T-cell (primary cell): ENCODE measurements at regions of chr1 and their contacts with region 1.

Region 1: GRCh38 chr1:27662707-27663393 is 9.1 kb downstream of the IFI6 start:
- DNase-seq: peak; percentile 65 to 95 (median 85)
- ATAC-seq: peak; percentile 66 to 85 (median 82)
- H3K4me3 ChIP-seq: peak overlapping the region; percentile 39 to 42
- H3K4me3 Mint-ChIP-seq: peak overlapping the region; percentile 75 to 84 (median 79)
- H3K27ac ChIP-seq: peak overlapping the region; percentile 90
- H3K27ac Mint-ChIP-seq: peak overlapping the region; percentile 98 to 99
- H3K4me1 ChIP-seq: peaks cover 22 to 54% of the 10 kb centered on the region in 2 experiments
- H3K4me1 Mint-ChIP-seq: peaks cover 48 to 53% (median 50%) of the 10 kb centered on the region in 3 donors
- H3K27me3 ChIP-seq: no peaks in the 10 kb centered on the region
- H3K27me3 Mint-ChIP-seq: no peaks in the 10 kb centered on the region

Region 2: DNA sequence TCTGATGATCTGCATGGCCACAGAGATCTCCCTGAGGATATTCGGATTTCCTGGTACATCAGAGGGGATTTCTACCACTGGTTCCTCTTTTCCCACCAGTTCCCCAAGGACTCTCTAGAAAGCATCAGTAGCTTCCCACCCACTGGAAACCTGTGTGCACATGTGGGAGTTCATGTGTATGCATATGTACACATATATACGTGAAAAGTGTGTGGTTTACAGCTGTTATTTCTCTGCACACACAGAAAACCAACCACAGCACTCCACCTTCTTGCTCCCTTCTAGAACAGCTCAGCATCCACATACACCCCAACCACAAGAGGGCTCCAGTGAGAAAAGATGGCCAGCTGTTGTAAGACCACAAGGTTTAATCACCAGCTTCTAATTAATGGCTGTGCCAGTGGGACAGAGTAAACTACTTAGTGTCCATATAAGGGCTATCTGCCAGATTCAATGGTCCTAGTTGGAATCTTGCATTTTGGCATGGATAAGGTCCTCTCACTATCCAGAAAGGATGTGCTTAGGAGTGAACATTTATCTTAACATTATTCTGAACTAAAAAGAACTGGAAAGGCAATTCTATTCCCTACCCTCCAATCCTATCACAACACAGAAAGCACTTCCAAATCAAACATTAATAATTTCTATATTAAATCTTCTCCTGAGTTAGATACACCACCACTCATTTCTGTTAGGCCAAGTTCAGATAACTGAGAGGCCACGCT is 246.3 kb before region 1 on chr1:
- CTCF ChIA-PET with region 1: interaction called, 4 to 15 read pairs
- POLR2A ChIA-PET with region 1: no interaction called
- DNase-seq: peak in 29 of 35 experiments; percentile 27 to 79 (median 45)
- ATAC-seq: peak; percentile 54 to 74 (median 68)
- H3K4me3 ChIP-seq: no peak overlapping the region
- H3K4me3 Mint-ChIP-seq: no peak overlapping the region
- H3K27ac ChIP-seq: no peak overlapping the region
- H3K27ac Mint-ChIP-seq: peak overlapping the region; percentile 48 to 69
- H3K4me1 ChIP-seq: peaks cover 8 to 18% of the 10 kb centered on the region in 2 experiments
- H3K4me1 Mint-ChIP-seq: peaks cover 38 to 47% (median 41%) of the 10 kb centered on the region in 3 donors
- H3K27me3 ChIP-seq: no peaks in the 10 kb centered on the region
- H3K27me3 Mint-ChIP-seq: no peaks in the 10 kb centered on the region

Region 3: DNA sequence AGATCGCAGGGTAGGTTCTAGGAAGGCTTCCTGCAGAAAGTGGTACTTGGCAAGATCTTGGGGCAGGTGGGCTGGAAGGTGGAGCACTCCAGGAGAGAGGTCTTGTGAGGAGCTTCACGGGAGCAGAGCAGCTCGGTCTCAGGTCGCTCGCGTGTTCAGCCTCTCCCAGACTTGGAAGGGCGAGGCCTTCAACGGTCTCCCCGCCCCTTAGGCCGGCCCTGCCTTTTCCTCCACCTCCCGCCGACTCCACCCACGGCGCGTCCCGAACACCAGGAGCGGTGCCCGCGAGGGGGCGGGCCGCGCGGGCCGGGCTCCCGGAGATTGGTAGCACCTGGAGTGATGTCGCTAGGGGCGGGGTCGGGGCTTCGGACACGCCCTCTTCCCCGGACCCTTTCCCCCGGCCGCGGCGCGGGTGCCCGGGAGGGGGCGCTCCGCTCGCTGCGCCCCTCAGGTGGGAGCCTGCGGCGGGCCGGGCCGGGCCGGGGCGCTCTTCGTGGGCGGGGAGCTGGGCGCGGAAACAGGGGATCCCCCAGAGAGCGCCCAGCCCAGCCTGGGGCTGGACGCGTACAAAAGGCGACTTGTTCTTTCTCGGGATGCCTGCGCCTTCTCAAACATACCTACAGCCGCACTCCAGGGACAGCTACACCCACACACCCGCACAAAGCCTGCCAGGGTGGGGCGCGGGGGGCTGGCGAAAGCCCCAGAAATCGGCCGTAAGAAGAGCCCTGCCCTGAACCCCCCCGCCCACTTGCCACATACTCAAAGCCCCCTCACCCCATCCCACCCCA is 94.4 kb before region 1 on chr1:
- CTCF ChIA-PET with region 1: interaction called in 1 of 2 experiments, 15 read pairs
- POLR2A ChIA-PET with region 1: no interaction called
- DNase-seq: peak; percentile 76 to 96 (median 86)
- ATAC-seq: peak; percentile 90 to 96 (median 93)
- H3K4me3 ChIP-seq: peak overlapping the region; percentile 11 to 39
- H3K4me3 Mint-ChIP-seq: peak overlapping the region; percentile 65 to 82 (median 71)
- H3K27ac ChIP-seq: peak overlapping the region; percentile 69
- H3K27ac Mint-ChIP-seq: peak overlapping the region; percentile 6 to 72
- H3K4me1 ChIP-seq: peaks cover 16 to 34% of the 10 kb centered on the region in 2 experiments
- H3K4me1 Mint-ChIP-seq: peaks cover 25 to 42% (median 40%) of the 10 kb centered on the region in 3 donors
- H3K27me3 ChIP-seq: no peaks in the 10 kb centered on the region
- H3K27me3 Mint-ChIP-seq: no peaks in the 10 kb centered on the region

Region 4: GRCh38 chr1:27589841-27590426 is 72.9 kb before region 1 on chr1:
- CTCF ChIA-PET with region 1: no interaction called
- POLR2A ChIA-PET with region 1: no interaction called
- DNase-seq: no peak
- ATAC-seq: no peak
- H3K4me3 ChIP-seq: no peak overlapping the region
- H3K4me3 Mint-ChIP-seq: no peak overlapping the region
- H3K27ac ChIP-seq: no peak overlapping the region
- H3K27ac Mint-ChIP-seq: no peak overlapping the region
- H3K4me1 ChIP-seq: peaks cover 4 to 18% of the 10 kb centered on the region in 2 experiments
- H3K4me1 Mint-ChIP-seq: peaks cover 0 to 3% (median 0%) of the 10 kb centered on the region in 3 donors
- H3K27me3 ChIP-seq: peaks cover 0 to 5% of the 10 kb centered on the region in 2 experiments
- H3K27me3 Mint-ChIP-seq: no peaks in the 10 kb centered on the region

Region 5: DNA sequence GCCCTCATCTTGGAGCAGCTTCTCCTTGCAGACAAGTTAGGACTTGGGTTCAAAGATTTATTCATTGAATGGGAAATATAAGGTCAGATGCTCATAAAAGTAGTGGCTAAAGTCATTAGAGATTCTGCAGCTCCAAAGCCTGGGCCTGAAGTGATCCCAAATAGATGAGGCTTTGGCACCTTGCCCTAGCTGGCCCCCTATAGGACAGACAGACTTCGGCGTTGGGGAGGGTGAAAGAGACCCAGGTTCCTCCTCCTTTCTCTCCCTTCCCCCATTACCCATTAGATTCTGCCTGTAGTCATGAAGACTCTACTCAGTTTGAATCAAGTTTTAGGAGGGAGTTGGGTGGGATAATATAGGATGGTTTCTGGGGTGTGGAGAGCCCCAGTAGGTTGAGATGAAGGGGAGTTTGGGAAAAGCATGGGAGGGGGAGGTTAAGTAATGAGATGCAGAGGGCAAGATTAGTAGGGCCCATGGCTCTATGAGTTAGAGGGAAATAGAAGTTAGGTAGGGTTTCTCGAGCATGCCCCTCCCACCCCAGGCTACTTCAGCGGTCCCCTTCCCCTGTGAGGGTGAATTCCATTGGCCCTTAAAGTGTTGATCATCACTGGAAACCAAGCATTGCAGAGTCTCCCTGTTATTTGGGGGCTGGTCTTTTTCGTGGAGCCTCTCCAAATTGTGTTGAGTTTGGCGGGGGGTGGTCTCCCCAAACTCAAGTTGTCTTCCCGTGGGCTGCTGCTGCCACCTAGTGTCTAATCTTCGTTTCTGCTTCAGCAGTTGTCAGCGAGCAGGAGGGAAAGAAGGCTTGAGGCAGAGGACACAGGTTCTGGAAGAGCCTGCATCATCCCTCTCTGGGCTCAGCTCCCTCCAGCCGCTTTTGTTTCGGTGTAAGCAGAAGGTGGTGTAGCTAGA is 56.8 kb before region 1 on chr1:
- CTCF ChIA-PET with region 1: interaction called, 16 to 50 read pairs
- POLR2A ChIA-PET with region 1: interaction called in 1 of 2 experiments, 3 read pairs
- DNase-seq: peak in 34 of 35 experiments; percentile 14 to 79 (median 52)
- ATAC-seq: no peak
- H3K4me3 ChIP-seq: no peak overlapping the region
- H3K4me3 Mint-ChIP-seq: peak overlapping the region in 2 of 3 donors; percentile 90 to 91
- H3K27ac ChIP-seq: no peak overlapping the region
- H3K27ac Mint-ChIP-seq: peak overlapping the region; percentile 34 to 76
- H3K4me1 ChIP-seq: peaks cover 25 to 73% of the 10 kb centered on the region in 2 experiments
- H3K4me1 Mint-ChIP-seq: peaks cover 24 to 33% (median 29%) of the 10 kb centered on the region in 3 donors
- H3K27me3 ChIP-seq: no peaks in the 10 kb centered on the region
- H3K27me3 Mint-ChIP-seq: no peaks in the 10 kb centered on the region

Region 6: GRCh38 chr1:27643701-27644625 is 18.9 kb before region 1 on chr1:
- CTCF ChIA-PET with region 1: interaction called, 7 to 14 read pairs
- POLR2A ChIA-PET with region 1: no interaction called
- DNase-seq: peak; percentile 49 to 85 (median 67)
- ATAC-seq: peak; percentile 96 to 97 (median 96)
- H3K4me3 ChIP-seq: no peak overlapping the region
- H3K4me3 Mint-ChIP-seq: no peak overlapping the region
- H3K27ac ChIP-seq: no peak overlapping the region
- H3K27ac Mint-ChIP-seq: peak overlapping the region; percentile 53 to 80
- H3K4me1 ChIP-seq: peaks cover 3 to 15% of the 10 kb centered on the region in 2 experiments
- H3K4me1 Mint-ChIP-seq: peaks cover 15 to 46% (median 17%) of the 10 kb centered on the region in 3 donors
- H3K27me3 ChIP-seq: no peaks in the 10 kb centered on the region
- H3K27me3 Mint-ChIP-seq: no peaks in the 10 kb centered on the region

Region 7: DNA sequence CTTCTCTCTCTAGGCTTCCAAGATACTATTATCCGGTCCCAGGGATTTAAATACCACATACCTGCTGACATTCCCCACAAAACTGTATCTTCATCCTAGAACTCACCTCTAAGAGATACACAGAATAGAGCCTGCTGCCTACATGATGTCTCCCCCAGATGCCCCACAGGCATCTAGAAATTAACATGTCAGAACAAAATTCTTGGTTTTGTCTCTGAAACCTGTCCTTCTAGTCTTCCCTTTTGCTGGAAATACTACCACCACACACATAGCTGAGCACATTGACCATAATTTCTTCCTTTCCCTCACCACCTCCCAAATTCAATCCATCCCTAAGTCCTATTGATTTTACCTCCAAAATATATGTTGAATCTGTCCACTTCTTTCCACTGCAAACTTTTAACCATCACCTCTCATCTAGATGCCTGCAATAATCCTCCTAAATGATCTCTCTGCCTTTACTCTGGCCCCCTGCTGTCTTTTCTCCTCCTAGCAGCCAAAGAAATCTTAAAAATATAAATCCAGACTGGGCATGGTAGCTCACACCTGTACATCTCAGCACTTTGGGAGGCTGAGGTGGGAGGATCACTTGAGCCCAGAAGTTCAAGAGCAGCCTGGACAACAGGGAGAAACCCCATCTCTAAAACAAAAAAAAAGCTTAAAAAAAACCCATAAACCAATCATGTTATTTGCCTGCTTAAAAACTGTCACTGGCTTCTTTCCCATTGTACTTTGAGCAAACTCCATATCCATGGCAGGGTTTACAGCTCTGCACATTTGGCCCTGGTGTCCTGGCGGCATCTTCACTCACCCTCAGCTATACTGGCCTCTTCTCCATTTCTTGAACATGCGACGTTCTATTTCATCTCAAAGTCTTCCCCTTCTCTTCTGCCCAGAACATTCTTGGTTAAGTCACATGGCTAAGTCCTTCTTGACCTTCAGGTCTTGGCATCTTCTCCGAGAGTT is 56.7 kb after region 1 on chr1:
- CTCF ChIA-PET with region 1: no interaction called
- POLR2A ChIA-PET with region 1: no interaction called
- DNase-seq: peak in 3 of 35 experiments; percentile 4 to 35 (median 8)
- ATAC-seq: peak in 3 of 4 experiments; percentile 35 to 66 (median 57)
- H3K4me3 ChIP-seq: no peak overlapping the region
- H3K4me3 Mint-ChIP-seq: no peak overlapping the region
- H3K27ac ChIP-seq: no peak overlapping the region
- H3K27ac Mint-ChIP-seq: no peak overlapping the region
- H3K4me1 ChIP-seq: no peaks in the 10 kb centered on the region
- H3K4me1 Mint-ChIP-seq: peaks cover 0 to 1% (median 1%) of the 10 kb centered on the region in 3 donors
- H3K27me3 ChIP-seq: peaks cover 0 to 11% of the 10 kb centered on the region in 2 experiments
- H3K27me3 Mint-ChIP-seq: peaks cover 12 to 22% of the 10 kb centered on the region in 2 donors